Activated naive CD4-positive, alpha-beta T cell treated with anti-CD3 and anti-CD28 coated beads, Interleukin-2, amount 10 ng/mL, durations not matched to agents 7 days and 5 days (primary cell): ENCODE measurements at regions of chr19 and their contacts with region 1.

Region 1: DNA sequence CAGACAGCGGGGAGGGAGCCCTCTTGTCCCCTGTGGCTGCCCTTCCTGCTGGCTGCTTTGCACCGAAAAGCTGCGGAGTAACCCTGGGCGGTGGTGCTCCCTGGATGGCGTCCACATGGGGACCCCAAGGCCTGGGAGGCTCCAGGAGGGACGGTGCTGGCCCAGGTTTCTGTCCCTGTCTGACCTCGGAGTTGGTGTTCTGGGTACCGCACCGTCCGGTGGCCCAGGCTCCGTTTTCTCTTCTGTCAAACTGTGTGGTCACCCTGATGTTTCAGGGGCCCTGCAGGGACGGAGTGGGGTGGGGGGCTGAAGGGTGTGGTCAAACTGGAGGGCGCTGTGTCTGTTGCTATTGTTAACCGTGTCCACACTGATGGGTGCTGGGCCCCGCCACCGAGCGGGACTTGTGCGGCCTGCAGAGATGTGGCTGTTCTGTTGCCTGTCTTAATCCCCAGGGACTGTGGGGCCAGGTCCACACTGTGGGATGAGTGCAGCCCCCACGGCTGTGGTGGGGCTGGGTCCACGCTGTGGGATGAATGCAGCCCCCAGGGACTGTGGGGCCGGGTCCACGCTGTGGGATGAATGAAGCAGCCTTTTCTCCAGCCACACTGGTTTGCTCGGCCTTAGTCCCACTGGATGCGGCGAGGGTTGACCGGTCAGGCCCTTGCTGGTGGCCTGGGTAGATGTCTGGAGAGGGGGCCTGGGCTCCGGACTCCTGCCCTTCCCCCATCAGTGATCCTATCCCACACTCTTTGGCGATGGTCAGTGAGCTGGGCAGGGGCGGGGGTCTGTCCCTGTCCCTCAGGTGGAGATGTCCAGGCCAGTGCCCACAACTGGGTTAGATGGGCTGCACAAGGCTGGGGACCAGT is 6.9 kb downstream of the GNA11 start:
- DNase-seq: no peak
- H3K4me3 Mint-ChIP-seq: no peak overlapping the region
- H3K27ac Mint-ChIP-seq: no peak overlapping the region
- H3K4me1 Mint-ChIP-seq: peaks cover 25% of the 10 kb centered on the region
- H3K27me3 Mint-ChIP-seq: peaks cover 86% of the 10 kb centered on the region

Region 2: DNA sequence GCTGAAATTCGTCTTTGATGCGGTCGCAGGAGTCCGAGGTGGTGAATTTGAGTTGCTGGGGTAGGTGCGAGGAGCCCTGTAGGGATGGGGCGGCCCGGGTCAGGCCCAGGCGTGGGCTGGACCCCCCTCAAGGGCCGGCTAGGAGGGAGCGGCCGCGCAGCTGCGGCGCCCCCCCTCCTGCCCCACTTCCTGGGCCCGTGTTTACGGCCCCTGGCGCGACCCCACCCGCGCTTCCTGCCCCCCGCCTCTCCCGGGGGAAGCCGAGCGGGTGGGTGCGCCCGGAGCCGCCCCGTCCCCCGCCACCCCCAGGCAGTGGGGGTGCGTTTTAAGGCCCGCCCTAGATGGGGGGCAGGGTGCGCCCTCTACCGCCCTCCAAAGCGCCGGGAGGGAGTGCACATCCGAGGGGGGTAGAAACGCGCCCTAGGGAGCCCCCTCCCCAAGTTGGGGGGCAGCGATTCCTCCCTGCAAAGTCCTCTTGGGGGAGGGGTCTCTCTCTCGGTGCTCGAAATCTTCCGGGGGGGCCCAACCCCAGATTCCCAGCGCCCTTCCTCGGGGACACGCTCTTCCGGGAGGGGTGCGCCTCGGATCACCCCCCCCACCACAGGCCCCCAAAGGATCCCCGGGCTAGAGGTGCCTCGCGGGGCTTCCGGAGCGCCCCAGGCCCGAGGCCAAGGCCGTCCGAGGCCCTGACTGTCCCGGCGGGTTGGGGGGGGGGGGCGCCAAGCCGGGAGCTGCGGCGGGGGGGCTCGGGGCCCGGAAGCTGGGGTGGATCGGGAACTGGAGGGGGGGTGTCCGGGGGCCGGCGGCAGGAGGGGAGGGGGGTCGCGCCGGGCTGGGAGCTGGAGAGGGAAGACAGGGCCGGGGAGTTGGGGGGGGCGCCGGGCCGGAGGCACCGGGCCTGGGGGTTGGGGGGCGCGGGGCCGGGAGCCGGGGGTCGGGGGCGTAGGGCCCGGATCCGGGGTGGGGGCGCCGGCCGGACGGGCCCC is 39.6 kb before region 1 on chr19:
- CTCF ChIA-PET with region 1: interaction called, 13 read pairs
- DNase-seq: peak; percentile 87
- H3K4me3 Mint-ChIP-seq: peak overlapping the region; percentile 95
- H3K27ac Mint-ChIP-seq: peak overlapping the region; percentile 97
- H3K4me1 Mint-ChIP-seq: peaks cover 53% of the 10 kb centered on the region
- H3K27me3 Mint-ChIP-seq: no peaks in the 10 kb centered on the region

Region 3: DNA sequence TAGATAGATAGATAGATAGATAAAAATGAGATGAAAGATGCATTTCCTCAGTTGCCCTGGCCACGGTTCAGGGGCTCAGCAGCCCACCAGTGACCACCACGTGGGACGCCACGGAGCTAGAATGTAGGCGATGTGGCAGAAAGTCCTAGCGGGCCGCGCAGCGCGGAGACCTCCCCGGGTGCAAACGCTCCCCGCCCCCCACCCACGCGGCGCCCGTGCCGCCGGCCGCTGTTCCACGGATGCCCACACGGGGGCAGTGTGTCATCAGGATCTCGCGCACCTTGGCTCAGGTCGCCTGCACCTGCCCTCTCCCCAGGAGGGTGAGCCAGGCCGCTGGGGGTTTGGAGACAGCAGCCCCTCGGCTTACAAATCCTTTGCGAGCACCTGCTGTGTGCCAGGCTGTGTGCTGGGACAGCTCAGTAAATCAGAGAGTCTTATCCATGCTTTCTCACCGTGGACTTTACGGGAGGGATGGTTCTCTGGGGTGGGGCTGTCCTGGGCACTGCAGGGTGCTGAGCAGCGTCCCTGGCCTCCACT is 25.1 kb before region 1 on chr19:
- CTCF ChIA-PET with region 1: interaction called, 75 read pairs
- DNase-seq: peak; percentile 81
- H3K4me3 Mint-ChIP-seq: no peak overlapping the region
- H3K27ac Mint-ChIP-seq: no peak overlapping the region
- H3K4me1 Mint-ChIP-seq: peaks cover 4% of the 10 kb centered on the region
- H3K27me3 Mint-ChIP-seq: peaks cover 48% of the 10 kb centered on the region

Region 4: DNA sequence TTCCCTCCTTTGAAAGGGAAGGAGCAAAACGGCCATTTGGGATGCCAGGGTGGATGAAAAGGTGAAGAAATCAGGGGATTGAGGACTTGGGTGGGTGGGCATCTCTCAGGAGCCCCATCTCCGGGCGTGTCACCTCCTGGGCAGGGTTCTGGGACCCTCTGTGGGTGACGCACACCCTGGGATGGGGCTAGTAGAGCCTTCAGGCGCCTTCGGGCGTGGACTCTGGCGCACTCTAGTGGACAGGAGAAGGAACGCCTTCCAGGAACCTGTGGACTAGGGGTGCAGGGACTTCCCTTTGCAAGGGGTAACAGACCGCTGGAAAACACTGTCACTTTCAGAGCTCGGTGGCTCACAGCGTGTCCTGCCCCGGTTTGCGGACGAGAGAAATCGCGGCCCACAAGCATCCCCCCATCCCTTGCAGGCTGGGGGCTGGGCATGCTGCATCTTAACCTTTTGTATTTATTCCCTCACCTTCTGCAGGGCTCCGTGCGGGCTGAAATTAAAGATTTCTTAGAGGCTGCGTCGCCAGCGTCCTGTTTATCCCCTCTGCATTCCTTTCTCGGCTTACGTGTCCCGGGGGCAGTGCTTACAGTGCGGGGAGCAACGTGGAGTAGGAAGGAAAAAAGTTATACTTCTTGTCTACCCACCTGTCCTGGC is 62.3 kb after region 1 on chr19:
- CTCF ChIA-PET with region 1: interaction called, 13 read pairs
- DNase-seq: peak; percentile 81
- H3K4me3 Mint-ChIP-seq: no peak overlapping the region
- H3K27ac Mint-ChIP-seq: peak overlapping the region; percentile 61
- H3K4me1 Mint-ChIP-seq: peaks cover 51% of the 10 kb centered on the region
- H3K27me3 Mint-ChIP-seq: peaks cover 6% of the 10 kb centered on the region